Dendritic cell treated with granulocyte-macrophage colony-stimulating factor and Interleukin-4, amounts not matched to agents 40 ng/mL and 50 ng/mL, for 4 days (primary cell): ENCODE measurements at regions of chr2 and their contacts with region 1.

Region 1: DNA sequence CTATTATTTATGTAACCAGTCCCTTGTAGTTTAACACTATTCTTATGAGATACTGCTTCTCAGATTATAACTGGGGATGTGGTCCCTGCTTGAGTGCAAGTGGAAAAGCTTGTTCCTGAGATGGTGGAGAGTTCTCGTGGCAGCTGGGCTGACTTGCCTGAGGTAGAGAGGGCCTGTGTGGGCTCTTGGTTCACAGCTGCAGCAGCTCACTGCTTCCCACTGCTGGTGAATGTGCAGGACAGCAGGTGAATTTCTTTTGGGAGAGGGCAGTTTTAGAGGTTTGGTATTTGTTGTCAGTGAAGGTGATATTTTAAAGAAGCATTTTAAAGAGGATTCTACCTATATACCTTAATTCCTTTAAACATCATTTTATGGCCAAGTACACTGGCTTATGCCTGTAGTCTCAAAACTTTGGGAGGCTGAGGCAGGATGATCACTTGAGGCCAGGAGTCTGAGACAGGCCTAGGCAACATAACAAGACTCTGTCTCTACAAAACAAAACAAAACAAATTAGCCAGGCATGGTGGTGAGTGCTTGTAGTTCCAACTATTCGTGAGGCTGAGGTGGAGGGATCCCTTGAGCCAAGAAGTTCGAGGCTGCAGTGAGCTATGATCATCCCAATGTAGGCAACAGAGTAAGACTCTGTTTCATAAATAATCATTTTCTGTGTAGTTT is 94.8 kb downstream of the MTA3 start:
- H3K4me3 Mint-ChIP-seq: no peak overlapping the region
- H3K27ac Mint-ChIP-seq: no peak overlapping the region
- H3K4me1 Mint-ChIP-seq: peaks cover 20% of the 10 kb centered on the region
- H3K27me3 Mint-ChIP-seq: no peaks in the 10 kb centered on the region

Region 2: GRCh38 chr2:42296226-42296625 is 367.0 kb before region 1 on chr2:
- intact Hi-C with region 1: no loop called
- H3K4me3 Mint-ChIP-seq: no peak overlapping the region
- H3K27ac Mint-ChIP-seq: no peak overlapping the region
- H3K4me1 Mint-ChIP-seq: no peaks in the 10 kb centered on the region
- H3K27me3 Mint-ChIP-seq: no peaks in the 10 kb centered on the region

Region 3: GRCh38 chr2:42494355-42495233 is 168.6 kb before region 1 on chr2:
- intact Hi-C with region 1: loop called (anchors 5 kb)
- H3K4me3 Mint-ChIP-seq: peak overlapping the region; percentile 78
- H3K27ac Mint-ChIP-seq: no peak overlapping the region
- H3K4me1 Mint-ChIP-seq: peaks cover 10% of the 10 kb centered on the region
- H3K27me3 Mint-ChIP-seq: peaks cover 64% of the 10 kb centered on the region

Region 4: DNA sequence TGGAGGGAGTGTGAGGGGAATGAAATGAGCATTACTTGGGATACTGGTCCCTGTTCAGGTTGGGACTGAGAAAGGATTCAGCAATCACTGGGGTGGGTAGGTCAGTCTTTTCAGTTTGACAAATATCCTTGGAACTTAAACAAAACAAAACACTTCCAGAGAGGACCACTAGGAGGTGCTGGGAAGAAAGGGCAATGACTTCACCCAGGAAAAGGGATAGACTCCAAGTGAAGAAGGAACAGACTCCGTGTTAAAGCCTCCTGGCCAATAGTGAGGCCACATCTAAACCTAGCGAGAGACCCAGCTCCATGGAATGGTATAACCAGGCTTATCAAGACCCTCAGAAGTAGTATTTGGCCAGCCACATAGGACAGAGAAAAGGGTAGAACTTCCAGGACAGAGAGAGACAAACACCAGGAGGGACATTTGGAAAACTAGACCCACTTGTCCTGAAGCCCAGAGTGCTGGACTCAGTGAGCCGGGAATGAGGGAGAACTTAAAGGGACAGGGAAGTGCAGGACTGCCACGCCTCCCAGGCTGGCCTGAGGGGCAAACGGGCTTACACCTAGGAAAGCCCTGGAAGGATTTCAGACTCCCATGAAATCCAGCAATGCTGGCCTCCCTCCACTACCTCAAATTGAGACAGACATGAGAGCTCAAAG is 149.9 kb before region 1 on chr2:
- intact Hi-C with region 1: loop called (anchors 1 kb)
- H3K4me3 Mint-ChIP-seq: no peak overlapping the region
- H3K27ac Mint-ChIP-seq: no peak overlapping the region
- H3K4me1 Mint-ChIP-seq: peaks cover 13% of the 10 kb centered on the region
- H3K27me3 Mint-ChIP-seq: peaks cover 17% of the 10 kb centered on the region

Region 5: GRCh38 chr2:42696987-42697386 is 33.7 kb after region 1 on chr2:
- intact Hi-C with region 1: no loop called
- H3K4me3 Mint-ChIP-seq: no peak overlapping the region
- H3K27ac Mint-ChIP-seq: no peak overlapping the region
- H3K4me1 Mint-ChIP-seq: peaks cover 24% of the 10 kb centered on the region
- H3K27me3 Mint-ChIP-seq: no peaks in the 10 kb centered on the region

Region 6: GRCh38 chr2:42754021-42754775 is 91.0 kb after region 1 on chr2:
- intact Hi-C with region 1: loop called (anchors 10 kb)
- H3K4me3 Mint-ChIP-seq: no peak overlapping the region
- H3K27ac Mint-ChIP-seq: peak overlapping the region; percentile 82
- H3K4me1 Mint-ChIP-seq: peaks cover 70% of the 10 kb centered on the region
- H3K27me3 Mint-ChIP-seq: peaks cover 36% of the 10 kb centered on the region